ENCODE measurements at regions of chr10 and their contacts with region 1.

Region 1: GRCh38 chr10:93376372-93377293 is 105.5 kb downstream of the MYOF start:
- DNase-seq: peak; percentile 90
- H3K4me3 Mint-ChIP-seq: no peak overlapping the region
- H3K27ac Mint-ChIP-seq: peak overlapping the region; percentile 55
- H3K4me1 Mint-ChIP-seq: peaks cover 30% of the 10 kb centered on the region
- H3K27me3 Mint-ChIP-seq: no peaks in the 10 kb centered on the region

Region 2: DNA sequence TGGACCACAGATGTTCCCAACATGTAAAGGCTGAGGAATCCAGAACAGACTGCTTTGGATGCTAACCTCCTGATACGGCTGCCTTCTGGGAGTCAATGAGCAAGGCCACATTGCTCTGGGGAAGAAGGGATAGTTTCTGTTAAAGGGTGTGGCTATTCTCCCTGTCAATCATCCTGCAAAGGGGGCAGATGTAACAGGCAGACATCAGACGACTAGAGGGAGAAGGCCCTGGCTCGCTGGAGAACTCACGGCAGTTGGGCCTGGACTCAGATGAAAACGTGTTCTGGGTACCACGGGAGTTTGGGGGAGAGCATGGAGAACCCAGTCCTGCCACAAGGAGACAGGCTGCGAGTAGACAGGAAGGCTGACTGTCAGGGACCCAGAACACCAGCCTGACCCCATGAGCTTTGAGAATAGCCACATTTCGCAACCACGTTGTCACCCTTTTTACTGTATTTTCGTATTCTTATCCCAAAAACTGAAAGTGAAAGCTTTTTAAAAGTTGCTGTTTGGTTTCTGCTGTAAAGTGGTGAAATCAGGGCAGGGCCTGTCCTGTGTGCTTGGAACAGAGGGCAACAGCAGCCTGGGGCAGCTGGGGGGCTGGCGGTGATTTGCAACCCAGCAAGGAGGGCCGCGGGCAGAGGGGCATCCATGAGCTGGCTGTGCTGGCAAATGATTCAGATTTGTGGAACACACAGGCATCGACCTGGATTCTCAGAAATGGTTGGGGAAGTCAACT is 10.2 kb after region 1 on chr10:
- intact Hi-C with region 1: loop called (anchors 1 kb)
- DNase-seq: peak; percentile 79
- H3K4me3 Mint-ChIP-seq: peak overlapping the region; percentile 58
- H3K27ac Mint-ChIP-seq: peak overlapping the region; percentile 84
- H3K4me1 Mint-ChIP-seq: peaks cover 34% of the 10 kb centered on the region
- H3K27me3 Mint-ChIP-seq: no peaks in the 10 kb centered on the region

Region 3: DNA sequence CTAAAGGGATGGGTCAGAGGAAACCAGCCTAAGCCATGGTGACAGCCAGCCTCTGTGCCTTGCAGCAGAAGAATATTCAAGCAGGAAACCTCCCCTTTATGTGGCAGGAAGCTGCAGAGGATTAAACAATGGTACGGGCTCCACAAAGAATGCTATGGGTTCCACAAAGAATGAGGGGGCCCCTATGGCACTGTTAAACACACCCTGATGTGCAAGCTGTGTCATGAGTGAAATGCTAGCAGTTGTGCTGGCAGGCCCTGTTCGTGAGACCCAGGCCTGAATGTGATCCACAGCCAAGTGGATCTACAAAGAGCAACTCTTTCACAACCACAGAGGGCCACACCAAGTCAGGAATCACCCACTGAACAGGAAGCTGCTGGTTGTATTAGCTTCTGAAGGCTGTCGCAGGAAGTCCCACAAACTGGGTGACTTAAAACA is 36.6 kb after region 1 on chr10:
- intact Hi-C with region 1: loop called (anchors 1 kb)
- DNase-seq: peak; percentile 83
- H3K4me3 Mint-ChIP-seq: peak overlapping the region; percentile 12
- H3K27ac Mint-ChIP-seq: peak overlapping the region; percentile 86
- H3K4me1 Mint-ChIP-seq: peaks cover 39% of the 10 kb centered on the region
- H3K27me3 Mint-ChIP-seq: no peaks in the 10 kb centered on the region

Region 4: DNA sequence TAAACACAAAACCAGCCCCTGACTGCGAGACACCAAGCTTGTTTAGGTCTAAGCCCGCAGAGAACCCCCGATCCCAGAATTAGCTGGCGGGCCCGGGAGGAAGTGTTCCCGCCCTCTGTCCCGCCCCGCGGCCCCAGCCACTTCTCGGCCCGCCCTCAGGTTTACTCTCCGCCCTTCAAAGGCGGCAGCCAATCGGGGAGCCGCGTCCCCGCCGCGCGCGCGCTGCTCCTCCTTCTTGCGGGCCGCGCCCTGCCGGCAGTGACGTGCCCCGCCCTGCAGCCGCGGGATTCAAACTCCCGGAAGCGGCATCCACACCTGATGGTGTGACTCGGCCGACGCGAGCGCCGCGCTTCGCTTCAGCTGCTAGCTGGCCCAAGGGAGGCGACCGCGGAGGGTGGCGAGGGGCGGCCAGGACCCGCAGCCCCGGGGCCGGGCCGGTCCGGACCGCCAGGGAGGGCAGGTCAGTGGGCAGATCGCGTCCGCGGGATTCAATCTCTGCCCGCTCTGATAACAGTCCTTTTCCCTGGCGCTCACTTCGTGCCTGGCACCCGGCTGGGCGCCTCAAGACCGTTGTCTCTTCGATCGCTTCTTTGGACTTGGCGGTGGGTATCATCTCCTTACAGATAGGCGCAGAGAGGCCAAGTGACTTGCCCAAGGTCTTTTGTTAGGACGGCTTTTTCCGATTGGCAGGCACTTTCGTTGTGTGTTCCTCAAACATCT is 119.8 kb after region 1 on chr10 and contains the start of gene CEP55:
- intact Hi-C with region 1: loop called (anchors 1 kb)
- DNase-seq: peak; percentile 99
- H3K4me3 Mint-ChIP-seq: peak within 1 kb of the TSS; percentile 90
- H3K27ac Mint-ChIP-seq: peak within 1 kb of the TSS; percentile 93
- H3K4me1 Mint-ChIP-seq: peaks cover 34% of the 10 kb centered on the region
- H3K27me3 Mint-ChIP-seq: no peaks in the 10 kb centered on the region
- total RNA-seq, gene CEP55: 58.5 and 59.3 TPM in 2 replicates

Region 5: GRCh38 chr10:93515071-93516005 is 138.7 kb after region 1 on chr10:
- intact Hi-C with region 1: loop called (anchors 1 kb)
- DNase-seq: no peak
- H3K4me3 Mint-ChIP-seq: no peak overlapping the region
- H3K27ac Mint-ChIP-seq: no peak overlapping the region
- H3K4me1 Mint-ChIP-seq: peaks cover 3% of the 10 kb centered on the region
- H3K27me3 Mint-ChIP-seq: no peaks in the 10 kb centered on the region

Measured in activated CD4-positive, alpha-beta T cell treated with anti-CD3 and anti-CD28 coated beads, Interleukin-2, amount 10 ng/mL, durations not matched to agents 24 days and 14 days (primary cell).